CD8-positive, alpha-beta T cell (primary cell): ENCODE measurements at regions of chr1 and their contacts with region 1.

Region 1: GRCh38 chr1:12596007-12596821 is 21.8 kb downstream of the DHRS3 start:
- DNase-seq: peak in 4 of 9 experiments; percentile 31 to 54 (median 37)
- ATAC-seq: peak; percentile 7
- H3K4me3 ChIP-seq: no peak overlapping the region
- H3K4me3 Mint-ChIP-seq: peak overlapping the region; percentile 56
- H3K27ac ChIP-seq: no peak overlapping the region
- H3K27ac Mint-ChIP-seq: peak overlapping the region; percentile 49
- H3K4me1 ChIP-seq: peaks cover 20% of the 10 kb centered on the region
- H3K4me1 Mint-ChIP-seq: peaks cover 42% of the 10 kb centered on the region
- H3K27me3 ChIP-seq: no peaks in the 10 kb centered on the region
- H3K27me3 Mint-ChIP-seq: no peaks in the 10 kb centered on the region
- CTCF ChIP-seq: no peak

Region 2: GRCh38 chr1:12511516-12512468 is 84.4 kb before region 1 on chr1:
- CTCF ChIA-PET with region 1: interaction called, 5 read pairs
- POLR2A ChIA-PET with region 1: interaction called, 4 read pairs
- intact Hi-C with region 1: loop called in 1 of 2 experiments (anchors 5 kb)
- DNase-seq: no peak
- ATAC-seq: no peak
- H3K4me3 ChIP-seq: peak overlapping the region in 1 of 2 experiments; percentile 20
- H3K4me3 Mint-ChIP-seq: peak overlapping the region; percentile 75
- H3K27ac ChIP-seq: peak overlapping the region; percentile 64 to 77
- H3K27ac Mint-ChIP-seq: peak overlapping the region; percentile 98
- H3K4me1 ChIP-seq: peaks cover 34% of the 10 kb centered on the region
- H3K4me1 Mint-ChIP-seq: peaks cover 52% of the 10 kb centered on the region
- H3K27me3 ChIP-seq: no peaks in the 10 kb centered on the region
- H3K27me3 Mint-ChIP-seq: no peaks in the 10 kb centered on the region
- CTCF ChIP-seq: no peak